ENCODE measurements at regions of chr18 and their contacts with region 1.

Region 1: GRCh38 chr18:58529714-58530354 is 99.1 kb downstream of the ALPK2 start:
- DNase-seq: no peak
- ATAC-seq: peak; percentile 55
- H3K4me3 ChIP-seq: no peak overlapping the region
- H3K27ac ChIP-seq: peak overlapping the region; percentile 20; the same call in 1 of the 2 replicates
- H3K4me1 ChIP-seq: peaks cover 30% of the 10 kb centered on the region
- H3K27me3 ChIP-seq: no peaks in the 10 kb centered on the region
- CTCF ChIP-seq: peak; percentile 83 to 97 (median 96)
- EP300 ChIP-seq: no peak
- POLR2A ChIP-seq: no peak
- RAD21 ChIP-seq: peak; percentile 98

Region 2: GRCh38 chr18:58054041-58054781 is 475.6 kb before region 1 on chr18:
- CTCF ChIA-PET with region 1: no interaction called
- POLR2A ChIA-PET with region 1: no interaction called
- RAD21 ChIA-PET with region 1: no interaction called
- SMC1A ChIA-PET with region 1: no interaction called
- in situ Hi-C with region 1: no loop called
- intact Hi-C with region 1: no loop called
- DNase-seq: no peak
- ATAC-seq: no peak
- H3K4me3 ChIP-seq: no peak overlapping the region
- H3K27ac ChIP-seq: no peak overlapping the region
- H3K4me1 ChIP-seq: no peaks in the 10 kb centered on the region
- H3K27me3 ChIP-seq: no peaks in the 10 kb centered on the region
- CTCF ChIP-seq: no peak
- EP300 ChIP-seq: no peak
- POLR2A ChIP-seq: no peak
- RAD21 ChIP-seq: no peak

Region 3: GRCh38 chr18:58515175-58515775 is 14.6 kb before region 1 on chr18:
- CTCF ChIA-PET with region 1: interaction called, 38 read pairs
- POLR2A ChIA-PET with region 1: interaction called, 4 read pairs
- RAD21 ChIA-PET with region 1: interaction called, 9 read pairs
- SMC1A ChIA-PET with region 1: interaction called, 20 read pairs
- in situ Hi-C with region 1: no loop called
- intact Hi-C with region 1: no loop called
- DNase-seq: no peak
- ATAC-seq: no peak
- H3K4me3 ChIP-seq: no peak overlapping the region
- H3K27ac ChIP-seq: no peak overlapping the region
- H3K4me1 ChIP-seq: no peaks in the 10 kb centered on the region
- H3K27me3 ChIP-seq: no peaks in the 10 kb centered on the region
- CTCF ChIP-seq: no peak
- EP300 ChIP-seq: no peak
- POLR2A ChIP-seq: no peak
- RAD21 ChIP-seq: no peak

Region 4: GRCh38 chr18:58584200-58585127 is 54.6 kb after region 1 on chr18:
- CTCF ChIA-PET with region 1: interaction called, 4 read pairs
- POLR2A ChIA-PET with region 1: no interaction called
- RAD21 ChIA-PET with region 1: interaction called, 4 read pairs
- SMC1A ChIA-PET with region 1: interaction called, 20 read pairs
- in situ Hi-C with region 1: no loop called
- intact Hi-C with region 1: no loop called
- DNase-seq: no peak
- ATAC-seq: peak; percentile 76
- H3K4me3 ChIP-seq: no peak overlapping the region
- H3K27ac ChIP-seq: no peak overlapping the region
- H3K4me1 ChIP-seq: no peaks in the 10 kb centered on the region
- H3K27me3 ChIP-seq: no peaks in the 10 kb centered on the region
- CTCF ChIP-seq: 0 out of 6 replicates have a peak, but pooled peaks of 1 of the 3 experiments have one; percentile 8
- EP300 ChIP-seq: no peak
- POLR2A ChIP-seq: no peak
- RAD21 ChIP-seq: no peak

Region 5: DNA sequence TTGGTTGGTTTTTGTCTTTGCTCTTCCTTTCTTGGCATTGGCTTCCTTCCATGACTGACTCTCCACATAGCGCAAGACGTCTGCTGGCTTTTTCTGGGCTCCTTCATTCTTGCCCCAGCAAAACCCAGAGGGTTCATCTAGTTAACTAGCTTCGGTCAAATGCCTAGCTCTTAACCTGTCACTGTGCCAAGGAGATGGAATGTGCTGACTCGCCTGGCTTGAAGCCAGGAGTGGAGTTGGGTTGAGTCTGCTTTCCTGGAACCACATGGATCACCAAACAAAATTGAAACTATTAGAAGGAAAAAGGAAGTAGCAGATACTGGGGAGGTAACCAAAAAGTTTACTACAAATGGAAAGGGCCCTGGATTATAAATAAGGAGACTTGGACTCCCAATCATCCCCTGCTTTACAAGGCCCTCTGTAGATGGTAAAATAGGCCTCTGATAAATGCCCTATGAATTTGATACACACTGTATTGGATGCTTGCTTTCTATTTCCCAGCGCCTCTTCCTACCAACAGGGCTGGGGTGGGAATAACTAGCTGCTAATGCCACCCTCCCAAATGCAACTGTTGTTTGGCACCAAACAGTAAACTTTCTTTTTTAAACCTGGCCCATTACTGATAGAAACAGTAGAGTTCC is 152.7 kb after region 1 on chr18:
- CTCF ChIA-PET with region 1: interaction called, 27 read pairs
- POLR2A ChIA-PET with region 1: interaction called, 4 read pairs
- RAD21 ChIA-PET with region 1: interaction called, 8 read pairs
- SMC1A ChIA-PET with region 1: interaction called, 14 read pairs
- in situ Hi-C with region 1: no loop called
- intact Hi-C with region 1: no loop called
- DNase-seq: no peak
- ATAC-seq: no peak
- H3K4me3 ChIP-seq: no peak overlapping the region
- H3K27ac ChIP-seq: peak overlapping the region; percentile 20; the same call in 1 of the 2 replicates
- H3K4me1 ChIP-seq: peaks cover 4% of the 10 kb centered on the region
- H3K27me3 ChIP-seq: no peaks in the 10 kb centered on the region
- CTCF ChIP-seq: no peak
- EP300 ChIP-seq: no peak
- POLR2A ChIP-seq: no peak
- RAD21 ChIP-seq: no peak

Region 6: GRCh38 chr18:58754544-58755068 is 224.8 kb after region 1 on chr18:
- CTCF ChIA-PET with region 1: interaction called, 743 read pairs
- POLR2A ChIA-PET with region 1: interaction called, 3 read pairs
- RAD21 ChIA-PET with region 1: interaction called, 10 read pairs
- SMC1A ChIA-PET with region 1: interaction called, 629 read pairs
- in situ Hi-C with region 1: no loop called
- intact Hi-C with region 1: no loop called
- DNase-seq: no peak
- ATAC-seq: peak; percentile 61
- H3K4me3 ChIP-seq: no peak overlapping the region
- H3K27ac ChIP-seq: no peak overlapping the region; the same call in 1 of the 2 replicates
- H3K4me1 ChIP-seq: peaks cover 8% of the 10 kb centered on the region
- H3K27me3 ChIP-seq: no peaks in the 10 kb centered on the region
- CTCF ChIP-seq: no peak
- EP300 ChIP-seq: no peak; a peak in 1 of 4 replicates
- POLR2A ChIP-seq: 0 out of 2 replicates have a peak, but pooled peaks have one; percentile 20
- RAD21 ChIP-seq: no peak

Region 7: GRCh38 chr18:58831606-58832005 is 301.8 kb after region 1 on chr18:
- CTCF ChIA-PET with region 1: no interaction called
- POLR2A ChIA-PET with region 1: no interaction called
- RAD21 ChIA-PET with region 1: no interaction called
- SMC1A ChIA-PET with region 1: no interaction called
- in situ Hi-C with region 1: no loop called
- intact Hi-C with region 1: no loop called
- DNase-seq: no peak
- ATAC-seq: no peak
- H3K4me3 ChIP-seq: no peak overlapping the region
- H3K27ac ChIP-seq: no peak overlapping the region
- H3K4me1 ChIP-seq: no peaks in the 10 kb centered on the region
- H3K27me3 ChIP-seq: no peaks in the 10 kb centered on the region
- CTCF ChIP-seq: no peak
- EP300 ChIP-seq: no peak
- POLR2A ChIP-seq: no peak
- RAD21 ChIP-seq: no peak

Region 8: DNA sequence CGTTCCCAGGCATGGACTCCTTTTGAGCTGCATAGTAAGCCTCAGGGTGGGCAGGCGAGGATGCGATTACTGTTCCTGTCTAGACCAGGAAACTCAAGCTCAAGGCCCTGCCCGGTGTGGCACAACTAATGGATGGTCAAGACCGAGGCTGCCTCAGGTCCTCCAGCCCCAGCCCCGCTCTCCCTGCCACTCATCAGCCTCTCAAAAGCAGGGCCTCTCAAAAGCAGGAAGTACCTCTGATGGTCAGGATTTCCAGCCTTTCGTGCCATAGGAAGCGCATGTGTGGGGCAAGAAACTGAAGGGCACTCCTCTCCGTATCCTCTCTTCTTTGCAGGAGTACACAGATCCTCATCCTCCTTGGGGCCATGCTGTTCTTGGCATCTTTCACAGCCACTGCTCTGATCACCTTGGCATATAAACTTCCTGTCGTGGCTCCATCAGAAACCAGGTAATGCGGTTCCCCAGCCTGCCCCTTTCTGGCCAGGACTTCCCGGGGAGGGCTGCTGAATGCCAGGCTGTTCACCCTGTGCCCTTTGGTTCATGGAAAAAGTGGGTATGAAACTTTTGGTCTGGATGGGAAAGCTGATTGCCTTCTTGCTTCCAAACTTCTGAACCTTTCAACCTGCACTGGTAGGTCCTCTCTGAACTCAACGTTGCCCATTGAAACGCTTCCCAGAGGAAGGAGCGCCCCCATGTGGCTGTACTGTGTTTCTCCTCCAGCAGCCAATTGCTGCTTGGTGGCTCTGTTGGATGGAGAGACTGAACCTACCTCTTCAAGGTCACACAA is 527.1 kb after region 1 on chr18:
- CTCF ChIA-PET with region 1: interaction called, 4 read pairs
- POLR2A ChIA-PET with region 1: no interaction called
- RAD21 ChIA-PET with region 1: no interaction called
- SMC1A ChIA-PET with region 1: no interaction called
- in situ Hi-C with region 1: loop called (anchors 5 kb)
- intact Hi-C with region 1: loop called (anchors 10 kb)
- DNase-seq: no peak
- ATAC-seq: peak; percentile 98
- H3K4me3 ChIP-seq: no peak overlapping the region
- H3K27ac ChIP-seq: no peak overlapping the region
- H3K4me1 ChIP-seq: no peaks in the 10 kb centered on the region; the same call in 1 of the 2 replicates
- H3K27me3 ChIP-seq: no peaks in the 10 kb centered on the region; a peak in 1 of 4 replicates
- CTCF ChIP-seq: peak; percentile 81 to 92 (median 91)
- EP300 ChIP-seq: no peak
- POLR2A ChIP-seq: no peak
- RAD21 ChIP-seq: peak; percentile 96

Measured in GM12878 (cell line).